ENCODE measurements at regions of chr12 and their contacts with region 1.

Region 1: DNA sequence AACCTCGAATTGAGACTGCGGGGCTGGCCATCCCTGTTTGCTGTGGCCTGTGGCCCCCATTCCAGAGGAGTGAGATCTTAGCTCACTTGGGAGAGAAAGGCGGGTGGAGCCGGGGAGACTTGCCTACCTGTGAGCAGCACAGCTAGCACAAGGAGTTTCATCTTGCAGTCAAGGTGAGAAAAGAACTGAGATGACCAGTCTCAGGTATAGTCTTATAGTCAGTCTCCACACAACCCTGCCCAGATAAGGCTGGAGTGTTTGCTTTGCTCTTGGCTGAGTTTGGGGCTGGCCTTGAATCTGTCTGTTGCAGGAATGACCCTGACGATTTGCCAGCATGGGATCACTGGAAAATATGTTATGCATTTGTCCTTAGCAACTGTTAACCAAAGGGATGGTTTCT is at the start of gene PLA2G1B:
- DNase-seq: no peak
- ATAC-seq: no peak
- H3K4me3 ChIP-seq: no peak within 1 kb of the TSS
- H3K4me3 Mint-ChIP-seq: peak within 1 kb of the TSS; percentile 7
- H3K27ac ChIP-seq: no peak within 1 kb of the TSS
- H3K27ac Mint-ChIP-seq: no peak within 1 kb of the TSS
- H3K4me1 ChIP-seq: peaks cover 12% of the 10 kb centered on the region
- H3K4me1 Mint-ChIP-seq: peaks cover 6% of the 10 kb centered on the region
- H3K27me3 ChIP-seq: peaks cover 4 to 5% of the 10 kb centered on the region in 2 experiments
- H3K27me3 Mint-ChIP-seq: peaks cover 4% of the 10 kb centered on the region
- CTCF ChIP-seq: no peak
- total RNA-seq, gene PLA2G1B: not detected

Region 2: GRCh38 chr12:120301962-120302815 is 25.4 kb before region 1 on chr12 and contains the start of gene SIRT4:
- CTCF ChIA-PET with region 1: interaction called, 13 read pairs
- POLR2A ChIA-PET with region 1: interaction called, 3 read pairs
- intact Hi-C with region 1: no loop called
- DNase-seq: peak; percentile 77 to 96 (median 86)
- ATAC-seq: peak; percentile 99
- H3K4me3 ChIP-seq: peak within 1 kb of the TSS; percentile 97
- H3K4me3 Mint-ChIP-seq: peak within 1 kb of the TSS; percentile 97
- H3K27ac ChIP-seq: peak within 1 kb of the TSS in 1 of 2 donors; percentile 60
- H3K27ac Mint-ChIP-seq: peak within 1 kb of the TSS; percentile 79
- H3K4me1 ChIP-seq: peaks cover 13% of the 10 kb centered on the region
- H3K4me1 Mint-ChIP-seq: peaks cover 11% of the 10 kb centered on the region
- H3K27me3 ChIP-seq: no peaks in the 10 kb centered on the region
- H3K27me3 Mint-ChIP-seq: no peaks in the 10 kb centered on the region
- CTCF ChIP-seq: peak; percentile 78
- total RNA-seq, gene SIRT4: 0.59 TPM in 1 of 2 experiments, not detected in the other

Region 3: DNA sequence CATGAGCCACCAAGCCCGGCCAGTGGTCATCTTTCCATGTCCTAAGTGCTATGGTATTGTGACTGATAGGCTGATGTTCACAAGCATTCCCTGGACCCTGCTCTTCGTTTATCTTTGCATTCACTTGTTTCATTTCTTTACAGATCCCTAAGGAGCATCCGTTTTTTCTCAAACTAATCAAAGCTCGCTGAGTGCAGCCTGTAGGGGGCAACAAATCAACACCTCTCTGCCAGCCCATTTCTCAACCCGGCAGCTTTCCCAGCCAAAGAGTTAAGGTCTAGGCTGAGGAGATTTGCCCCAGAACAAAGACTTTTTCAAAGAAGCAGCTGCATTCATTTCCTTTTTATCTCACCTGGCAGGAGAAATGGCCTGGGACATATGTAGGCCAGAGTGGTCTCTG is 13.4 kb before region 1 on chr12:
- CTCF ChIA-PET with region 1: no interaction called
- POLR2A ChIA-PET with region 1: no interaction called
- intact Hi-C with region 1: no loop called
- DNase-seq: no peak
- ATAC-seq: no peak
- H3K4me3 ChIP-seq: no peak overlapping the region
- H3K4me3 Mint-ChIP-seq: no peak overlapping the region
- H3K27ac ChIP-seq: no peak overlapping the region
- H3K27ac Mint-ChIP-seq: no peak overlapping the region
- H3K4me1 ChIP-seq: peaks cover 15% of the 10 kb centered on the region
- H3K4me1 Mint-ChIP-seq: peaks cover 16% of the 10 kb centered on the region
- H3K27me3 ChIP-seq: no peaks in the 10 kb centered on the region
- H3K27me3 Mint-ChIP-seq: no peaks in the 10 kb centered on the region
- CTCF ChIP-seq: no peak

Measured in CD4-positive, alpha-beta T cell (primary cell).